AG04449 (cell line): ENCODE measurements at regions of chr17 and their contacts with region 1.

Region 1: DNA sequence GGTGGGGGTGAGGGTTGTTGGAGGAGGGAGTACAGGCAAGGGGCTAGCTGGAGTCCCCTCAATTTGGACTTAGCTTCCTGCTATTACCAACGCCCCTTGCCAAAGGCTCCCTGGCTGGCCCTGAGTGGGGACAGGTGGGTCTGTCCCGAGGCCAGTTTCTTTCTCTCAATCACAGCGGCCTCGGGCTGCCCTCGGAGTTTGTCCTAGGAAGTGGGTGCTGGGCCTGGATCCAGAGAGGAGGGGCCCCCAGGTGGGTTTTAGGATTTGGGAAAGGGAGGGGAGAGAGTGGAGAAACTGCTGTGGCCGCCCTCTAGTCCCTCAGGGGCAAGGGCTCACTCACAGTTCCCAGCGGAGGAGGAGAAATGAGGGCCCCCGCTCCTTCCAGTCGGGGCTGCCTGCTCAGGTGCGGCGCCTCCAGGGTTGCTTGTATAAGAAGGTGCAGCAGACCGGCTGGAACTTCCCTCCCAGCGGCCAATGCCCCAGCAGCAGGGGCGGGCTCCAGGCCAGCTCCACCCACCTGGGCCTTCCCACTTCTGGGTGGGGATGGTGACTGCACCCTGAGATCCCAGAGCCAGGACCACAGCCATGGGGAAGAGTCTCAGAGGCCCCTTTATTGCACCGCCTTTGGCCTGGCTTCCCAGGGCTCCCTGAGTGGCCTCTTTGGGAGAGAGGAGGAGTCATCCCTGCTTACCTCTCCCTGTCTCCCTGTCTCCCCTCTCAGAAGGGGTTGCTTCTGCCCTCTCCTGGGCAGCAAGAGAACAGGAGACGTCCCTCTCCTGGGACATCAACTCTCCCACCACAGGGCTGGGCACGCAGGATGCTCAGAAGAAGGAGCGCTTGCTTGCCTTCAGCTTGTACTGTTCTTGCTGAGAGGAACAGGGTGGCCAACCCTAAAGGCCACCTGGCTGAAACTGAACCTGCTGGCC is 112.0 kb upstream of the SMURF2 start:
- DNase-seq: no peak
- H3K4me3 ChIP-seq: no peak overlapping the region
- CTCF ChIP-seq: peak; percentile 73

Region 2: DNA sequence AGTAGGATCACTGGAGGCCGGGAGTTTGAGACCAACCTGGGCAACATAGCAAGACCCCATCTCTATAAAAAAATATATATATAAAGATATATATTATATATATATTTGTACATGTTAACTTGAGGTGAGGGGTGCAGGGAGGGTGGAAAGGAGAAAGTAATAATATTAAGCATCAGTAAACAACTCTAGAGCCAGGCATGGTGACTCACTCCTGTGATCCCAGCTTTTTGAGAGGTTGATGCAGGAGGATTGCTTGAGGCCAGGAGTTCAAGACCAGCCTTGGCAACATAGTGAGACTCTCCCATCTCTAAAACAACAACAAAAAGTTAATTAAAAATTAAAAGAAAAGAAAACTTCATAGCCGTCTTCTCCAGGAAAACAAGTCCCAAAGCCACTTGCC is 50.3 kb before region 1 on chr17:
- CTCF ChIA-PET with region 1: no interaction called
- POLR2A ChIA-PET with region 1: no interaction called
- DNase-seq: no peak
- H3K4me3 ChIP-seq: no peak overlapping the region
- CTCF ChIP-seq: no peak

Region 3: GRCh38 chr17:64736804-64737492 is 37.2 kb before region 1 on chr17:
- CTCF ChIA-PET with region 1: interaction called, 10 read pairs
- POLR2A ChIA-PET with region 1: no interaction called
- DNase-seq: no peak
- H3K4me3 ChIP-seq: no peak overlapping the region
- CTCF ChIP-seq: peak; percentile 42